Activated B cell treated with CpG ODN at 0.5 μM for 24 hours (primary cell): ENCODE measurements at regions of chr2 and their contacts with region 1.

Region 1: GRCh38 chr2:230974096-230974913 is 21.6 kb upstream of the SPATA3 start:
- DNase-seq: peak; percentile 43
- ATAC-seq: peak; percentile 88
- H3K4me3 Mint-ChIP-seq: peak overlapping the region; percentile 60
- H3K27ac Mint-ChIP-seq: peak overlapping the region; percentile 92
- H3K4me1 Mint-ChIP-seq: peaks cover 44% of the 10 kb centered on the region
- H3K27me3 Mint-ChIP-seq: peaks cover 2% of the 10 kb centered on the region
- CTCF ChIP-seq: no peak

Region 2: GRCh38 chr2:230924470-230925341 is 49.6 kb before region 1 on chr2 and contains the start of gene GPR55:
- CTCF ChIA-PET with region 1: no interaction called
- POLR2A ChIA-PET with region 1: interaction called, 5 read pairs
- intact Hi-C with region 1: loop called (anchors 2 kb)
- DNase-seq: peak; percentile 18
- ATAC-seq: peak; percentile 81
- H3K4me3 Mint-ChIP-seq: peak within 1 kb of the TSS; percentile 80
- H3K27ac Mint-ChIP-seq: peak within 1 kb of the TSS; percentile 79
- H3K4me1 Mint-ChIP-seq: peaks cover 40% of the 10 kb centered on the region
- H3K27me3 Mint-ChIP-seq: no peaks in the 10 kb centered on the region
- CTCF ChIP-seq: no peak
- total RNA-seq, gene GPR55: 4.5 and 6.3 TPM in 2 replicates

Region 3: GRCh38 chr2:230956827-230957755 is 17.2 kb before region 1 on chr2:
- CTCF ChIA-PET with region 1: no interaction called
- POLR2A ChIA-PET with region 1: interaction called, 19 read pairs
- intact Hi-C with region 1: loop called (anchors 1 kb)
- DNase-seq: no peak
- ATAC-seq: peak; percentile 83
- H3K4me3 Mint-ChIP-seq: peak overlapping the region; percentile 87
- H3K27ac Mint-ChIP-seq: peak overlapping the region; percentile 80
- H3K4me1 Mint-ChIP-seq: peaks cover 18% of the 10 kb centered on the region
- H3K27me3 Mint-ChIP-seq: peaks cover 29% of the 10 kb centered on the region
- CTCF ChIP-seq: no peak

Region 4: GRCh38 chr2:231110551-231110950 is 136.2 kb after region 1 on chr2:
- CTCF ChIA-PET with region 1: no interaction called
- POLR2A ChIA-PET with region 1: no interaction called
- intact Hi-C with region 1: no loop called
- DNase-seq: no peak
- ATAC-seq: no peak
- H3K4me3 Mint-ChIP-seq: no peak overlapping the region
- H3K27ac Mint-ChIP-seq: no peak overlapping the region
- H3K4me1 Mint-ChIP-seq: no peaks in the 10 kb centered on the region
- H3K27me3 Mint-ChIP-seq: no peaks in the 10 kb centered on the region
- CTCF ChIP-seq: no peak